ENCODE measurements at regions of chr9 and their contacts with region 1.

Region 1: DNA sequence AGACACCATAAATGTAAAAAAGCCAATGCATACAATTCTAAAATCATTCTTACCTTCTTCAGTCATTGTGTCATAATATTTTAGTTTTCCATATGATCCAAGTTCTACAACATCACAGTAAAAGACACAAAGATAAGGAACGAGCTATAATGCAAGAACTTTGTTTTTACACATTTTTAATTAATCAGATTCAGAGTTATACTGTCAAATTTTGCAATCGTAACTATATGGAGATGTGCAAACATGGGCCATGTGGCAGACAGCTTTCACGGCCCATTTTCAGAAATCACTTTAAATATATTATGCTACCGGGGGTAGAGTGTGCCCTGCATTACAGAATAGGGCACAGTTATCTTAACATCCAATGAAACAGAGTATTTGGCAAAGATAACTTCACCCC is 188.4 kb downstream of the ACER2 start:
- H3K4me3 ChIP-seq: no peak overlapping the region
- H3K27ac ChIP-seq: no peak overlapping the region
- H3K4me1 ChIP-seq: no peaks in the 10 kb centered on the region
- CTCF ChIP-seq: no peak

Region 2: DNA sequence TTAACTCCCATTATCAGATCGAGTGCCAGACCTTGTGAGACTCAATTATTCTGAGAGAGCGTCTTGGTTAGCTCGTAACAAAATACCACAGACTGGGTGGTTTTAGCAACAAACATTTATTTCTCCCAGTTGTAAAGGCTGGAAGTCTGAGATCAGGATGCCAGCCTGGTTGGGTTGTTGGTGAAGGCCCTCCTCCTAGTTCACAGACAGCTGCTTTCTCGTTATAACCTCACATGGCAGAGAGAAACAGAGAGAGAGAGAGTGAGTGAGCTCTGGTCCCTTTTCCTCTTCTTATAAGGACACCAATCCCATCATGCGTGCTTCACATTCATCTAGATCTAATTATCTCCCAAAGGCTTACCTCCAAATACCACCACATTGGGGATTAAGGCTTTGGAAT is 305.9 kb after region 1 on chr9:
- CTCF ChIA-PET with region 1: interaction called, 10 read pairs
- POLR2A ChIA-PET with region 1: no interaction called
- H3K4me3 ChIP-seq: no peak overlapping the region
- H3K27ac ChIP-seq: no peak overlapping the region
- H3K4me1 ChIP-seq: no peaks in the 10 kb centered on the region
- CTCF ChIP-seq: no peak

Measured in HEK293 (cell line).